Colonic mucosa (tissue), 4 donors: ENCODE measurements at regions of chr4 and their contacts with region 1.

Region 1: GRCh38 chr4:186144142-186144955 is 39.8 kb downstream of the FAM149A start:
- DNase-seq: peak; percentile 66
- H3K4me3 ChIP-seq: peak overlapping the region; percentile 49
- H3K27ac ChIP-seq: peak overlapping the region; percentile 53
- H3K4me1 ChIP-seq: no peaks in the 10 kb centered on the region
- H3K27me3 ChIP-seq: no peaks in the 10 kb centered on the region
- CTCF ChIP-seq: no peak

Region 2: GRCh38 chr4:185886832-185887524 is 257.4 kb before region 1 on chr4:
- intact Hi-C with region 1: no loop called
- DNase-seq: no peak
- H3K4me3 ChIP-seq: no peak overlapping the region
- H3K27ac ChIP-seq: no peak overlapping the region
- H3K4me1 ChIP-seq: no peaks in the 10 kb centered on the region
- H3K27me3 ChIP-seq: no peaks in the 10 kb centered on the region
- CTCF ChIP-seq: no peak

Region 3: GRCh38 chr4:186191200-186192065 is 47.1 kb after region 1 on chr4 and contains the start of gene CYP4V2:
- intact Hi-C with region 1: loop called (anchors 2 kb)
- DNase-seq: peak; percentile 87
- H3K4me3 ChIP-seq: peak within 1 kb of the TSS; percentile 85
- H3K27ac ChIP-seq: peak within 1 kb of the TSS; percentile 99
- H3K4me1 ChIP-seq: no peaks in the 10 kb centered on the region
- H3K27me3 ChIP-seq: no peaks in the 10 kb centered on the region
- CTCF ChIP-seq: peak; percentile 31
- total RNA-seq, gene CYP4V2: 20.3 to 36.0 TPM

Region 4: GRCh38 chr4:186283311-186283710 is 139.0 kb after region 1 on chr4:
- intact Hi-C with region 1: no loop called
- DNase-seq: no peak
- H3K4me3 ChIP-seq: no peak overlapping the region
- H3K27ac ChIP-seq: no peak overlapping the region
- H3K4me1 ChIP-seq: no peaks in the 10 kb centered on the region
- H3K27me3 ChIP-seq: no peaks in the 10 kb centered on the region
- CTCF ChIP-seq: no peak

Region 5: GRCh38 chr4:186404562-186405134 is 260.3 kb after region 1 on chr4:
- intact Hi-C with region 1: no loop called
- DNase-seq: no peak
- H3K4me3 ChIP-seq: no peak overlapping the region
- H3K27ac ChIP-seq: no peak overlapping the region
- H3K4me1 ChIP-seq: peaks cover 4% of the 10 kb centered on the region
- H3K27me3 ChIP-seq: no peaks in the 10 kb centered on the region
- CTCF ChIP-seq: no peak